ENCODE measurements at regions of chr9 and their contacts with region 1.

Region 1: GRCh38 chr9:72013292-72013760 is 47.1 kb downstream of the C9orf57 start:
- DNase-seq: no peak
- H3K4me3 ChIP-seq: no peak overlapping the region
- H3K27ac ChIP-seq: no peak overlapping the region
- H3K4me1 ChIP-seq: no peaks in the 10 kb centered on the region
- H3K27me3 ChIP-seq: no peaks in the 10 kb centered on the region
- CTCF ChIP-seq: no peak
- POLR2A ChIP-seq: no peak

Region 2: GRCh38 chr9:70318002-70318401 is 1695.3 kb before region 1 on chr9:
- intact Hi-C with region 1: loop called in 1 of 2 experiments (anchors 10 kb)
- DNase-seq: no peak
- H3K4me3 ChIP-seq: no peak overlapping the region
- H3K27ac ChIP-seq: no peak overlapping the region
- H3K4me1 ChIP-seq: no peaks in the 10 kb centered on the region
- H3K27me3 ChIP-seq: no peaks in the 10 kb centered on the region
- CTCF ChIP-seq: no peak
- POLR2A ChIP-seq: no peak

Measured in adrenal gland (tissue), 19 donors.